ENCODE measurements at regions of chr4 and their contacts with region 1.

Region 1: GRCh38 chr4:175935016-175935661 is 123.1 kb upstream of the GPM6A start:
- DNase-seq: no peak
- H3K4me3 ChIP-seq: no peak overlapping the region
- H3K27ac ChIP-seq: no peak overlapping the region
- H3K4me1 ChIP-seq: no peaks in the 10 kb centered on the region
- CTCF ChIP-seq: no peak

Region 2: GRCh38 chr4:175916626-175917351 is 18.4 kb before region 1 on chr4:
- CTCF ChIA-PET with region 1: no interaction called
- POLR2A ChIA-PET with region 1: interaction called, 11 read pairs
- intact Hi-C with region 1: no loop called
- DNase-seq: no peak
- H3K4me3 ChIP-seq: no peak overlapping the region
- H3K27ac ChIP-seq: no peak overlapping the region
- H3K4me1 ChIP-seq: no peaks in the 10 kb centered on the region
- CTCF ChIP-seq: no peak

Region 3: GRCh38 chr4:176013476-176014247 is 78.5 kb after region 1 on chr4:
- CTCF ChIA-PET with region 1: no interaction called
- POLR2A ChIA-PET with region 1: no interaction called
- intact Hi-C with region 1: no loop called
- DNase-seq: peak; percentile 79
- H3K4me3 ChIP-seq: peak overlapping the region; percentile 26
- H3K27ac ChIP-seq: peak overlapping the region; percentile 85
- H3K4me1 ChIP-seq: peaks cover 52% of the 10 kb centered on the region
- CTCF ChIP-seq: no peak

Measured in OCI-LY7 (cell line).